Activated T-helper 1 cell treated with anti-CD3 and anti-CD28 coated beads, Interleukin-12 subunit alpha, Interleukin-12 subunit beta, Interleukin-2, Interleukin-4 antibody, amounts not matched to agents 30 ng/mL and 10 ng/mL and 1 ng/mL, durations not matched to agents 14 hours and 24 hours and 36 hours (primary cell): ENCODE measurements at regions of chr3 and their contacts with region 1.

Region 1: GRCh38 chr3:170414202-170414663 is 4.4 kb upstream of the CLDN11 start:
- DNase-seq: peak; percentile 17
- H3K4me3 Mint-ChIP-seq: no peak overlapping the region
- H3K27ac Mint-ChIP-seq: no peak overlapping the region
- H3K4me1 Mint-ChIP-seq: peaks cover 5% of the 10 kb centered on the region
- H3K27me3 Mint-ChIP-seq: peaks cover 37% of the 10 kb centered on the region

Region 2: GRCh38 chr3:168436245-168436724 is 1977.9 kb before region 1 on chr3:
- intact Hi-C with region 1: no loop called
- DNase-seq: no peak
- H3K4me3 Mint-ChIP-seq: no peak overlapping the region
- H3K27ac Mint-ChIP-seq: no peak overlapping the region
- H3K4me1 Mint-ChIP-seq: no peaks in the 10 kb centered on the region
- H3K27me3 Mint-ChIP-seq: no peaks in the 10 kb centered on the region

Region 3: GRCh38 chr3:169863458-169863899 is 550.8 kb before region 1 on chr3:
- intact Hi-C with region 1: loop called (anchors 5 kb)
- DNase-seq: peak; percentile 44
- H3K4me3 Mint-ChIP-seq: no peak overlapping the region
- H3K27ac Mint-ChIP-seq: no peak overlapping the region
- H3K4me1 Mint-ChIP-seq: peaks cover 24% of the 10 kb centered on the region
- H3K27me3 Mint-ChIP-seq: peaks cover 25% of the 10 kb centered on the region

Region 4: GRCh38 chr3:170307671-170308403 is 106.4 kb before region 1 on chr3:
- intact Hi-C with region 1: loop called (anchors 1 kb)
- DNase-seq: no peak
- H3K4me3 Mint-ChIP-seq: no peak overlapping the region
- H3K27ac Mint-ChIP-seq: no peak overlapping the region
- H3K4me1 Mint-ChIP-seq: no peaks in the 10 kb centered on the region
- H3K27me3 Mint-ChIP-seq: no peaks in the 10 kb centered on the region

Region 5: DNA sequence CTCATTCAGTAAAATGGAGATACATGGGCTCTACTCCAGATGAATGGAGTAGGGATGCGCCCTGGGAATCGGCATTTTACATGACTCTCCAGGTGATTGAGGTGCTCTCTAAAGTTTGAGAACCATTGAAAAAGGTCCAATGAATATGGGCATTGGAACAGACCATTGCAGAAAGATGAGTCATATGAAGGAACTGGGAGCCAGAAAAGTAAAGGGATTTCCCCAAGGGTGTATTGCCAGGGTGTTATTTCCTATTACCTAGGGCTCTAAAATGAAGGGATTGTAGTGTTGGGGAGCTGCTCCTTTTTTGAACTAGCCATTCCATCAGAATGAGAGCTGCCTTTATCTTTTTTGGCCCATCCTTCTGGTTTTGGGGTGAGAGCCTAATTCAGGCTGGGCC is 26.1 kb after region 1 on chr3:
- intact Hi-C with region 1: no loop called
- DNase-seq: no peak
- H3K4me3 Mint-ChIP-seq: no peak overlapping the region
- H3K27ac Mint-ChIP-seq: no peak overlapping the region
- H3K4me1 Mint-ChIP-seq: peaks cover 9% of the 10 kb centered on the region
- H3K27me3 Mint-ChIP-seq: peaks cover 6% of the 10 kb centered on the region

Region 6: DNA sequence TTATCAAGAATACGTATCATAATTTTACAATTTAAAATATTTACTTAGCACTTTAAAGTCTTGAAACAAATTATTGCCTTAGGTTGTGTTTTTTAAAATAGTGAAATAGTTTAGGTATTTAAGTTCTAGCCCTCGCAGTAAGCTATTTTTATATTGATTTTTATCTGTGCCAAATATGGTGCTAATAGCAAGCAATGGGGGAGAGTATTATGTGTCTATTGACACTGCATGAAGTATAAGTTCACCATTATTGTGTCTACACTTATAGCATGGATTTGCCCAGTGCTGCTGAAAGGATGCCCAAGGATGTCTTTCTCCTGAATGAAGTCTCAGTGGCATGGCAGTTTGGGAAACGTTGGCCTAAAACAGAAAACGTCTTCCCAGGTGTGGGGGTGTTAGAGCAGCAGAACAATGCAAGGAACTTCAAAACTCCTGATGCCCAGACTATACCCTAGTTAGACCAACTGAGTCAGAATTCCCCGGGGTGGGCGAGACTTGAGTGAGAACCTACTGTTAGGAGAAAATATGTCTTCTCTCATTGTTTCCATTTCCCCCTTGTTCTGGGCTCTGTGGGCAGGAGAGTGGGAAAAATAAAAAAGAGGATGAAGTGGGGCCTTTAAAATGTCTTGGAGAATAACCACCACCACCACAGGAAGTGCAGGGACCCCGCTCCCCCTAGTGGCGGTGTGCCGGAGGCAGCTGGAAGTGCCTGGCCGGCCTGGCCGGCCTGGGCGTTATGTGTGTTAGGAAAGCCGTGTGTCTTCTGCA is 275.8 kb after region 1 on chr3:
- intact Hi-C with region 1: loop called (anchors 1 kb)
- DNase-seq: no peak
- H3K4me3 Mint-ChIP-seq: no peak overlapping the region
- H3K27ac Mint-ChIP-seq: no peak overlapping the region
- H3K4me1 Mint-ChIP-seq: no peaks in the 10 kb centered on the region
- H3K27me3 Mint-ChIP-seq: no peaks in the 10 kb centered on the region

Region 7: DNA sequence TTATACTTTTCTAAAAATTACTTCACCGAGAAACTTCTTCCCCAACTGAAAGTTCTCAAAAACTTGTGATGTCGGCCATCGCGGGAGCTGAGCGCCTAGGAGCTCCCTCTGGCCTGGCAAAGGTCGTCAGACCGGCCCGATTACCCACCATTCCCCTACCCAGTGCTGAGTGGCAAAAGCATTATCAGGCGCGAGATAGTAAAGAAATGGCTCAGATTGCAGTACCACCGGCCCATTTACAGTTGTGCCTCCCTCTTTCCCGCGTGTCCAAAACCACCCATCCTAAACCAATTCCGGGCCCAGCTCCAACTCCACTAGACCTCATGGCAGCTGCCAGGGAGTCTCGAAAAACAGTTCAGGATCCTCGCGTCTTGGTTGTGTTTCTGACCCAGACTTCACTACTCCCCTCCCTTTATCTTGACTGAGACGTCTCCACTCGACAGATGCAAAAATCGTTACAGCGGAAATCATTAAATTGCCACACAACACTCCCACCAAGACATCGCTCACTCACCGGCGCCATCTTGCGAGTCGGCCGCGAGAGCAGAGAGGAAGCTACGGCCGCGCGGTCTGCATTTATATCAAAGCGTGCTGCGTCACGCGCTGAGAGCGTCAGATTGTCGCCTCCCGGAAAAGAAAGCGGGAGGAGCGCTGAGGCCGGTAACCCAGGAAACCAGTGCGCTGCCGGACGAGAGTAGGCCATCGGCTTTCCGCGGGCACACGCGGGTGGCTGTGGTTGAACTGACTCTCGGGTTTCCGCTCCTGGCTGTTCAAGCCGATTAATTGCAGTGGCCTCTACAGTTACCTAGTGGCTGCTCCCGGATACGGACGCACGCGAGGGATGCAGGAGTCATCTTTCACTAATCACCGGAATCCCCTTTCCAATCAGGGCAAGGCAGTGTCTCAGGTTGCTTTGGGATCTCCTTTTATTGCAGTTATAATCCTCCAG is 455.7 kb after region 1 on chr3 and contains the start of gene RPL22L1:
- intact Hi-C with region 1: loop called (anchors 5 kb)
- DNase-seq: peak; percentile 90
- H3K4me3 Mint-ChIP-seq: peak within 1 kb of the TSS; percentile 98
- H3K27ac Mint-ChIP-seq: peak within 1 kb of the TSS; percentile 100
- H3K4me1 Mint-ChIP-seq: peaks cover 24% of the 10 kb centered on the region
- H3K27me3 Mint-ChIP-seq: peaks cover 4% of the 10 kb centered on the region
- total RNA-seq, gene RPL22L1: 123 and 145 TPM in 2 replicates